Activated naive CD4-positive, alpha-beta T cell treated with anti-CD3 and anti-CD28 coated beads, Interleukin-2, amount 10 ng/mL, durations not matched to agents 7 days and 5 days (primary cell): ENCODE measurements at regions of chr1 and their contacts with region 1.

Region 1: GRCh38 chr1:52825868-52826267 is 16.7 kb upstream of the ZYG11A start:
- DNase-seq: no peak
- H3K4me3 Mint-ChIP-seq: no peak overlapping the region
- H3K27ac Mint-ChIP-seq: no peak overlapping the region
- H3K4me1 Mint-ChIP-seq: no peaks in the 10 kb centered on the region
- H3K27me3 Mint-ChIP-seq: peaks cover 1% of the 10 kb centered on the region

Region 2: GRCh38 chr1:52842643-52843309 is 16.9 kb after region 1 on chr1 and contains the start of gene ZYG11A:
- CTCF ChIA-PET with region 1: interaction called, 11 read pairs
- DNase-seq: peak; percentile 85
- H3K4me3 Mint-ChIP-seq: peak within 1 kb of the TSS; percentile 71
- H3K27ac Mint-ChIP-seq: no peak within 1 kb of the TSS
- H3K4me1 Mint-ChIP-seq: peaks cover 17% of the 10 kb centered on the region
- H3K27me3 Mint-ChIP-seq: peaks cover 42% of the 10 kb centered on the region